Breast epithelium (tissue), 4 donors: ENCODE measurements at regions of chr14 and their contacts with region 1.

Region 1: DNA sequence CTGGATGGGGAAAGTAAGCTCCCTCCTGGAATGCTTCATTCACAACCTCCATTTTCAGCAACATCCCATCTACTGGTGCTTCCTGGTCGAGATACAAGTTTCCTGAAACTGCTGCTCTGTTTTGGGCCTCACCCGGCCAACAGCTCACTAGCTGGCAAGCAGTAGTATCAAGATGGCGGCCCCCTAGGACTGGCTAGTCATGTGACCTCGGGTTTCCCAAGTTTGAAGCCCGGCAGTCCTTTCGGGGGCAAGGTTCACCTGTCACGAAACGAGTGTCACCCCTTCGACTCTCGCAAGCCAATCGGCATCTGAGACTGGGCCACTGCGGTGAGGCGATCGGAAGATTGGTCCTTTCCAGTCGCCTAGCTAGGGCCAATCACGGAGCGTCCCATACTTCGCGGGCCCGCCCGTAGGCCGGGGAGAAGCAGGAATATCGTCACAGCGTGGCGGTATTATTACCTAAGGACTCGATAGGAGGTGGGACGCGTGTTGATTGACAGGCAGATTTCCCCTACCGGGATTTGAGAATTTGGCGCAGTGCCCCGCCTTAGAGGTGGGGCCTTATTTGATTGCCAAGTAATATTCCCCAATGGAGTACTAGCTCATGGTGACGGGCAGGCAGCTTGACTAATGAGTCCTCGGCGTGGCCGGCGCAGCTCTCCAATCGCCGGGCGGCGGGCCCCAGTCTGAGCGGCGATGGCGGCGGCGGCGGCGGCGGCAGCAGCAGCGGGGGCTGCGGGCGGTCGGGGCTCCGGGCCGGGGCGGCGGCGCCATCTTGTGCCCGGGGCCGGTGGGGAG is at the start of gene PABPN1:
- DNase-seq: peak; percentile 100
- H3K4me3 ChIP-seq: peak within 1 kb of the TSS; percentile 76 to 97 (median 92)
- H3K27ac ChIP-seq: peak within 1 kb of the TSS; percentile 94 to 97
- H3K4me1 ChIP-seq: peaks cover 0 to 4% of the 10 kb centered on the region in 2 donors
- H3K27me3 ChIP-seq: no peaks in the 10 kb centered on the region
- CTCF ChIP-seq: peak in 1 of 3 donors; percentile 16
- POLR2A ChIP-seq: peak; percentile 23
- total RNA-seq, gene PABPN1: 45.9 to 87.2 (median 74.1) TPM

Region 2: GRCh38 chr14:22986508-22987054 is 334.4 kb before region 1 on chr14:
- intact Hi-C with region 1: loop called (anchors 5 kb)
- DNase-seq: peak; percentile 90
- H3K4me3 ChIP-seq: no peak overlapping the region
- H3K27ac ChIP-seq: no peak overlapping the region
- H3K4me1 ChIP-seq: no peaks in the 10 kb centered on the region
- H3K27me3 ChIP-seq: peaks cover 0 to 1% of the 10 kb centered on the region in 2 donors
- CTCF ChIP-seq: peak; percentile 87 to 95 (median 93)
- POLR2A ChIP-seq: no peak